Breast epithelium (tissue), 4 donors: ENCODE measurements at regions of chr4 and their contacts with region 1.

Region 1: DNA sequence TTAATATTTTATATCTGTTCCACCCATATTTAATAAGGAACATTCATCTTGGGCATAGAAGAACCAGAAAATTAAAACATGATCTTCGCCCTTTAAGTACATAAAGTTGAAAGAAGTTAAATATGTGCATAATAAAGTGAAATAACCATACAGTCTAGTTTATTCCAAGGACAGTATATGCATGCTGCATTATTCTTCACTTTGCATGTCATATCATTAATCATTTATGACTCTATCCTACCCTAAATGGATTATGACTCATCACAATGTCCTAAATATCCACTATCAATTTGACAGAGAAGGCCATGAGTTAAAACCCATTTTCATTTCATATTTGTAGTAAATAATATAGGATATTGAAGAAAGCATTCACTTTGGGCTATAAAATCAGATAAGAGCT is 576.5 kb upstream of the GNPDA2 start:
- DNase-seq: no peak
- H3K4me3 ChIP-seq: no peak overlapping the region
- H3K27ac ChIP-seq: no peak overlapping the region
- H3K4me1 ChIP-seq: no peaks in the 10 kb centered on the region
- H3K27me3 ChIP-seq: no peaks in the 10 kb centered on the region
- CTCF ChIP-seq: no peak
- POLR2A ChIP-seq: no peak

Region 2: GRCh38 chr4:45346816-45347435 is 44.1 kb after region 1 on chr4:
- intact Hi-C with region 1: loop called (anchors 2 kb)
- DNase-seq: no peak
- H3K4me3 ChIP-seq: no peak overlapping the region
- H3K27ac ChIP-seq: no peak overlapping the region
- H3K4me1 ChIP-seq: no peaks in the 10 kb centered on the region
- H3K27me3 ChIP-seq: no peaks in the 10 kb centered on the region
- CTCF ChIP-seq: no peak
- POLR2A ChIP-seq: no peak